ENCODE measurements at regions of chr1 and their contacts with region 1.

Region 1: DNA sequence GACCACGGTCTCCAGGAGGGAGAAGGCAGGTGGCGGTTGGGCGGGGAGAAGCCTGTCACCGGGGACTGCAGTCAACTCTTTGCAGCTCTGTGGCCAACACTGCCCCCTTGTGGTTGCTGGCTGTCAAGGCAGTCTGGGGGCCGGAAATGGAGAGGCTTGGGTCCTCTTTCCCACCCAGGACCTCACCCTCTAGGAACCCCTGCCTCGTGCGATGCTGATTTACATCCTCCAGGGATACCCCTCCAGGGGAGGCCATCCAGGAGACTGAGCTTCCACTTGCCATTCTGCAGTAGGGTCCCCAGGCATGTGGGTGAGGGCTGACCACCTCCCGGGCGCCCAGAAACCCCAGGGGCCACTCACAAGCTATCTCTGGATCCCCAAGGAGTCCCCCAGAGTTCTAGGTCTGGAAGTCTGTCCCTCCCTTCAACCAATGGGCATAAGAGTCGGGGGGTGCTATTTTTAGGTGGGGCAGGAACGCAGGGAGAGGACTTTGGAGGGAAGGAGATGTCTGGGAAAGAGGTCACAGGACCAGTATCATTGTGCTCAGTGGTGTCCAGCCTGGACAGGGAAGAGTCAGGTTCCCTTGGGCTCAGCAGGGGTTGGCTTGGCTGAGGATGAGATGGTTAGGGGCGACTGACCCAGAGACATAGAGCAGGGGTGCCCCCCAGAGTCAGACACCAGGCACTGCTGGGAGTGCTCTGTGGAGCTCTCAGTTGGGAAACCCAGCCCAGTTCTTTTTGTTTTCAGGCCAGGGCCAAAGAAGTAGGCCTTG is 7.1 kb upstream of the GPR61 start:
- DNase-seq: peak; percentile 58 to 64
- ATAC-seq: peak; percentile 83 to 94
- H3K4me3 ChIP-seq: no peak overlapping the region
- H3K27ac ChIP-seq: peak overlapping the region; percentile 67 to 84
- H3K4me1 ChIP-seq: peaks cover 4% of the 10 kb centered on the region; the same call in 2 of the 3 replicates
- CTCF ChIP-seq: peak; percentile 55
- EP300 ChIP-seq: no peak
- POLR2A ChIP-seq: no peak
- RAD21 ChIP-seq: peak; percentile 71 to 81

Region 2: DNA sequence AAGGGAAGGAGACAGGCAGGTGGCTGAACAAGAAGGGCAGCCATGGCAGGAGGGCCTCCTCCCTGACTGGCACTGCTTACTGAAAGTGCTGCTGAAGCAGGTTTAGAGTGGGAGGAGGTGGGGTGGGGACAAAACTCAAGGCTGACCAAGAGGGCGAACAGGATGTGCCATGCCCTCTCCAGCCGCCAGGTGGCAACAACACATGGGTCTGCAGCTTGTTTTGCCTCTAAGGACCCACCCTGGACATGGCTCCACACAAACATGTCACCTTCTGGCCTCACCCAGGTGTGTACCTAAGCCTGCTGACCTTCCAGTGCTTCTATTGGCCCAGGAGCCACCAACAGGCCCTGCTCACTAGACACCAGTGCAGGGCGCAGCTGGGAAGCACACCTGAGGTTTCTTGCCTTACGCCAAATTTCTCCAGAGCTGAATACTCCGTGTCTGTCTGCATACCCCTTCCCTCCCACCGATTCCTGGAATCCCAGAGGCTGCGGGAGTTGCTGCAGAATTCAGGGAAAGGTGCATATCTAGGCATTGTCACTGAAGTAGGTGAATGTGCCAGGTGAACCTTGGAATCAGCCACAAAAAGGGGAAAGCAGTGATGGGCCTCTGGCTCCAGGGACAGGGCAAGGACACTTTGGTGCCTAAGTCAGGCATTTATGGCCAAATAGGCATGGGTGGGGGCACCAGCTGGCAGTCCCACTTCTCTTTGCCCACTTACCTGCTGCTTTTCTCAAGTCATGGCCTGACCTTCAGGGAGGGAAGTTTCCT is 254.9 kb before region 1 on chr1:
- CTCF ChIA-PET with region 1: interaction called, 25 read pairs
- POLR2A ChIA-PET with region 1: no interaction called
- DNase-seq: peak; percentile 64 to 76
- ATAC-seq: peak; percentile 16 to 60; a peak in 3 of 6 replicates
- H3K4me3 ChIP-seq: no peak overlapping the region
- H3K27ac ChIP-seq: peak overlapping the region; percentile 95 to 99
- H3K4me1 ChIP-seq: peaks cover 57% of the 10 kb centered on the region
- CTCF ChIP-seq: peak; percentile 69
- EP300 ChIP-seq: no peak
- POLR2A ChIP-seq: no peak
- RAD21 ChIP-seq: peak; percentile 56 to 67

Region 3: GRCh38 chr1:109493805-109494539 is 38.6 kb before region 1 on chr1 and contains the start of gene CYB561D1:
- CTCF ChIA-PET with region 1: interaction called, 749 read pairs
- POLR2A ChIA-PET with region 1: interaction called, 5 read pairs
- DNase-seq: peak; percentile 52 to 78
- ATAC-seq: peak; percentile 83 to 94
- H3K4me3 ChIP-seq: peak within 1 kb of the TSS; percentile 75
- H3K27ac ChIP-seq: peak within 1 kb of the TSS; percentile 85 to 98
- H3K4me1 ChIP-seq: peaks cover 6% of the 10 kb centered on the region; the same call in 1 of the 3 replicates
- CTCF ChIP-seq: peak; percentile 82
- EP300 ChIP-seq: no peak
- POLR2A ChIP-seq: peak; percentile 66
- RAD21 ChIP-seq: peak; percentile 16 to 34; a peak in 3 of 5 replicates
- polyA plus RNA-seq, gene CYB561D1: 4.0 and 4.9 TPM in 2 replicates

Region 4: GRCh38 chr1:109516872-109517271 is 15.7 kb before region 1 on chr1:
- CTCF ChIA-PET with region 1: interaction called, 232 read pairs
- POLR2A ChIA-PET with region 1: no interaction called
- DNase-seq: no peak
- ATAC-seq: peak in 1 of 2 experiments; percentile 21; a peak in 2 of 6 replicates
- H3K4me3 ChIP-seq: no peak overlapping the region
- H3K27ac ChIP-seq: no peak overlapping the region
- H3K4me1 ChIP-seq: no peaks in the 10 kb centered on the region
- CTCF ChIP-seq: no peak
- EP300 ChIP-seq: no peak
- POLR2A ChIP-seq: no peak
- RAD21 ChIP-seq: no peak

Region 5: GRCh38 chr1:109564194-109564878 is 31.8 kb after region 1 on chr1:
- CTCF ChIA-PET with region 1: no interaction called
- POLR2A ChIA-PET with region 1: no interaction called
- DNase-seq: no peak
- ATAC-seq: no peak
- H3K4me3 ChIP-seq: no peak overlapping the region
- H3K27ac ChIP-seq: peak overlapping the region in 1 of 2 experiments; percentile 32; a peak in 1 of 6 replicates
- H3K4me1 ChIP-seq: peaks cover 70% of the 10 kb centered on the region
- CTCF ChIP-seq: no peak
- EP300 ChIP-seq: no peak
- POLR2A ChIP-seq: no peak
- RAD21 ChIP-seq: no peak

Measured in A549 (cell line).